ENCODE measurements at regions of chr2 and their contacts with region 1.

Region 1: DNA sequence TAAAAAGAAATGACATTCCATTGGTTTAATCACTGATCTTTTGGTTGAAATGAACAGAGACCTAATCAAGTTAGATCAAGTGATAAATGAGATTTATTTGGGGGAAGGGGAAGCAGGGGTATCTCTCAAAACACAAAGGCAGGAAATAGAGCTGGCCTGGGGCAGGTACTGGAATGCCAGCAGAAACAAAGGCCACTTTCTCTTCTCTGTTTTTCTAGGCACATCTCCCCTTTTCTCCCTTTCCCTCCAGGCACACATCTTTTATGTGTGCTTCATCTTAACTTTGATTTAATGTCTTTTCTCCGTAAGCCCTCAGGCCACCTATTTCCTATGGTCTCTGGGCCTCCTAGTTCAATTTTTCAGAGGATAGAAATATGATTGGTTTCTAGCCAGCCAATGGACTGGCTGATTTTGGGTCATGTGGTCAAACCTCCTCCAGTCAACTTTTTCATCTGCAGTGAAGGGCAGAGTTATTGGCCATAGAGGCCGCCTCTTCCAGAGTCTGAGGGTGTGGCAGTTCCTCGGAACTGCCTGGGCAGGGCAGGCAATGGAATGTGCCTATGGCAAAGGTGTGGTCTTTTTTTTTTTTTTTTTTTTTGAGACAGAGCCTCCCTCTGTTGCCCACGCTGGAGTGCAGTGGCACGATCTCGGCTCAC is 58.9 kb upstream of the FAM136A start:
- DNase-seq: peak; percentile 48
- H3K4me3 ChIP-seq: no peak overlapping the region
- H3K27ac ChIP-seq: peak overlapping the region; percentile 14
- H3K4me1 ChIP-seq: peaks cover 15% of the 10 kb centered on the region
- H3K27me3 ChIP-seq: no peaks in the 10 kb centered on the region
- CTCF ChIP-seq: no peak

Region 2: DNA sequence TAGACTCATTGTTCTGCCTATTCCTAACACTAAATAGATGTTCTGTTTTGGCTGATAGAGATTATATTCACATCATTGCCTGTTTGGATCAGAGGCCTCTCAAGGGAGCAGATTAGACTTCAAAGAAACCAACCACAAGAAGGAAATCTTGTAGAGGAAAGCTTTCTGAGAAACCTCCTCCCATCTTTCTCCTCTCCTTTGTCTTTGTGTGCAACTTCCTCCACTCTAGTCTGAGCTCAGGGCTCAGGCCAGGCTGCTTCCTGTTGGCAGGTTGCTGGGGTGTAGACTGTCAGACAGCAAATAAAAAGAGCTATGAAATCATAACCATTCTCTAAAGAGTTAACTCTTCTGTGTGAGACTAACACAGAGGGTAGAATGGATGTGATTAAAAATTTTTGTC is 79.8 kb after region 1 on chr2:
- CTCF ChIA-PET with region 1: no interaction called
- dilution Hi-C with region 1: loop called (anchors 5 kb)
- in situ Hi-C with region 1: no loop called
- intact Hi-C with region 1: no loop called
- DNase-seq: no peak
- H3K4me3 ChIP-seq: no peak overlapping the region
- H3K27ac ChIP-seq: no peak overlapping the region
- H3K4me1 ChIP-seq: no peaks in the 10 kb centered on the region
- H3K27me3 ChIP-seq: no peaks in the 10 kb centered on the region
- CTCF ChIP-seq: no peak